MCF 10A (cell line): ENCODE measurements at regions of chr7 and their contacts with region 1.

Region 1: GRCh38 chr7:133742709-133743538 is 384.2 kb upstream of the LRGUK start:
- DNase-seq: peak; percentile 39
- H3K4me3 Mint-ChIP-seq: no peak overlapping the region
- H3K27ac Mint-ChIP-seq: no peak overlapping the region
- H3K4me1 Mint-ChIP-seq: no peaks in the 10 kb centered on the region
- H3K27me3 Mint-ChIP-seq: no peaks in the 10 kb centered on the region
- CTCF ChIP-seq: peak; percentile 49

Region 2: DNA sequence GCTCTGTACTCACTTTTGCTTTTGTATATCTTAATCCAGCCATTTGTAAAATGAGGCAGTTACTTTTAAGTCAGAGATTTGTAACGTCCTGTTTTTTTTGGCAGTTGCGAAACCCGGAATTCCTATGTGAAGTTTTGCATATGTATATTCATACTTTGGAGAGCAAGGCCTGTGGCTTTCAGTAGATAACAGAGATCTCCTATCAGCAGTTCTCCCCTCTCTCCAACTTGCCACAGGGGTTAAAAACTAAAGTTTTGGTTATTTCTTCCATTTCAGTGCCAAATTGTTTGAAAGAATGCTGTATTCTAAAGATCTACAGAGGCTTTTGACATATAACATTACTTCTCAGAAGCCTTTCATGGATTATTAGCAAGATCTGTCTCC is 387.6 kb before region 1 on chr7:
- CTCF ChIA-PET with region 1: no interaction called
- POLR2A ChIA-PET with region 1: no interaction called
- intact Hi-C with region 1: loop called (anchors 10 kb)
- DNase-seq: peak; percentile 67
- H3K4me3 Mint-ChIP-seq: no peak overlapping the region
- H3K27ac Mint-ChIP-seq: no peak overlapping the region
- H3K4me1 Mint-ChIP-seq: peaks cover 25% of the 10 kb centered on the region
- H3K27me3 Mint-ChIP-seq: no peaks in the 10 kb centered on the region
- CTCF ChIP-seq: no peak

Region 3: DNA sequence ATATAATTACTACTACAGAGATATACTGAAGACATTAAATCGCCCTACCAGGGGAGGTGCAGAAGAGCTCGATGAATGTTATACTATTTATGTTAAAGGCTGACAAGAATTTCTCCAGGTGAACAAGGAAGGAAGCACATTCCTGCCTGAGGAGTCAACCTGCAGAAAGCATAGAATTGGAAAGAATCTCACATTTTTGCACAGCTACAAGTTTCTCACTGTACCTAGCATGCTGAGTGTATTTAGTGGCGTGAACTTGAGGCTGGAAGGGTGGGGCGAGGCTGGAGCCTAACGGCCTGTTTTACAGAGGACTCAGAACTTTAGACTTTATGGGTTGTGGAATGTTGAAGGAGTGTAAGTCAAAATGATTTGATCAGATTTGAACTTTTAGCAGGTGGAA is 10.6 kb after region 1 on chr7:
- CTCF ChIA-PET with region 1: interaction called, 10 read pairs
- POLR2A ChIA-PET with region 1: interaction called, 3 read pairs
- intact Hi-C with region 1: no loop called
- DNase-seq: no peak
- H3K4me3 Mint-ChIP-seq: no peak overlapping the region
- H3K27ac Mint-ChIP-seq: no peak overlapping the region
- H3K4me1 Mint-ChIP-seq: peaks cover 19% of the 10 kb centered on the region
- H3K27me3 Mint-ChIP-seq: no peaks in the 10 kb centered on the region
- CTCF ChIP-seq: no peak

Region 4: GRCh38 chr7:133769668-133770067 is 26.7 kb after region 1 on chr7:
- CTCF ChIA-PET with region 1: interaction called, 11 read pairs
- POLR2A ChIA-PET with region 1: no interaction called
- intact Hi-C with region 1: no loop called
- DNase-seq: no peak
- H3K4me3 Mint-ChIP-seq: no peak overlapping the region
- H3K27ac Mint-ChIP-seq: no peak overlapping the region
- H3K4me1 Mint-ChIP-seq: peaks cover 18% of the 10 kb centered on the region
- H3K27me3 Mint-ChIP-seq: no peaks in the 10 kb centered on the region
- CTCF ChIP-seq: no peak